ENCODE measurements at regions of chr19 and their contacts with region 1.

Region 1: DNA sequence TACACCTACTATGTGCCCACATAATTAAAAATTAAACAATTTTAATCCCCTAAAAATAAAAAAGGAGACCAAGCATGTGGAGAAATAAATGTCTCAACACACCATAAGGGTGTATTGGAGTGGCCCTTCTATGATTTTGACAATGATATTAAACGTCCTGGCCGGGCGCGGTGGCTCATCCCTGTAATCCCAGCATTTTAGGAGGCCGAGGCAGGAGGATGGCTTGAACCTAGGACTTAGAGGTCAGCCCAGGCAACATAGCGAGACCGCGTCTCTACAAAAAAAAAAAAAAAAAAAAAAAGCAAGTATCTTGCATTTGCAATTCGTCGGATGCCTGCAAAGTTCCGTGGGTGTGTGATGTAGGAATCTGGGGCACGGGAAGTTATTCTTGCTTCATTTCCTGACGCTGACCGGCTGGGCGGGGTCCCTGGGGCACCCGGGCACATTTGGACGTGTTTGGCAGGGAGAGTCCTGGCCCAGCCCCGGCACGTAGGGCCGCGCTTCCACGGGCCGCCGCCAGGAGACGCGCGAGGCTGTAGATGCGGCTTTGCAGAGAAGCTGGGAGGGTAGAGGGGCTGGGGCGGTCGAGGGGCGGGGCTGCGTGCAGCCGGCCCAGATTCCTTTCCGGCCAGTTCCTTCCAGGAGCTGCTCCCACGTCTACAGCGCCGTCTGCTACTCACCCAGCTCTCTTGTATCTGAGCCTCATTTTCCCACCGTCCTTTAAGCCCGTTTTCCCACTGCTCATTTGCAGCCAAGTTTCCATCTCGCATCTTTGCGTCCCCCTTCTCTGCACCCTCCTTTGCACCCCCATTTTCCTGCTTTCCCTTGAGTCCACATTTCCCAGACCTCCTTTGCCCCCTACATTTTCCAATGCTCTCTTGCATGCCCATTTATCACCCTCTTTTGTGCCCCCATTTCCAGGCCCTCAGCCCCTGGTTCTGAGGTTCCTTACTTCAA is 2.2 kb upstream of the TSPAN16 start:
- DNase-seq: peak; percentile 96 to 98 (median 98)
- H3K4me3 ChIP-seq: peak overlapping the region in 2 of 3 experiments; percentile 19 to 69
- H3K4me3 Mint-ChIP-seq: peak overlapping the region; percentile 67 to 82
- H3K27ac ChIP-seq: peak overlapping the region; percentile 58 to 78
- H3K27ac Mint-ChIP-seq: peak overlapping the region; percentile 84 to 95 (median 93)
- H3K4me1 ChIP-seq: peaks cover 75 to 78% of the 10 kb centered on the region in 2 donors
- H3K4me1 Mint-ChIP-seq: peaks cover 72% of the 10 kb centered on the region
- H3K27me3 ChIP-seq: no peaks in the 10 kb centered on the region
- H3K27me3 Mint-ChIP-seq: peaks cover 0 to 5% (median 4%) of the 10 kb centered on the region in 3 donors
- CTCF ChIP-seq: peak; percentile 98

Region 2: DNA sequence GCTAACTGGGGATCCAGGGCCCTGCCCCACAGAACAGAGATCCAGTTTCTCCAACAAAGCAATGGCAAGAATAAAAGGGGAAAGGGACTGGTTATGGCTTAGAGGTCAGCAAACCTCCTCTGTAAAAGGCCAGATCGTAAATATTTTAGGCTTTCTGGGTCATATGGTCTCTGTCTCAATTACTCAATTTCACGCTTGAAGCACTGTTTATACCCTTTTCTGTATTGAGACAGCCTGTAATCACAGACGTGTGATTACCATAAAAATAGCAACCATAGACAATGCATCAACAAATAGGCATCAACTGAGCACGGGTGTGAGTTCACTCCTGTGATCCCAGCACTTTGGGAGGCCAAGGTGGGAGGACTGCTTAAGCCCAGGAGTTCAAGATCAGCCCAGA is 36.4 kb after region 1 on chr19:
- intact Hi-C with region 1: loop called (anchors 5 kb)
- DNase-seq: no peak
- H3K4me3 ChIP-seq: no peak overlapping the region
- H3K4me3 Mint-ChIP-seq: no peak overlapping the region
- H3K27ac ChIP-seq: no peak overlapping the region
- H3K27ac Mint-ChIP-seq: peak overlapping the region in 4 of 7 donors; percentile 31 to 50 (median 46)
- H3K4me1 ChIP-seq: peaks cover 19 to 29% of the 10 kb centered on the region in 2 donors
- H3K4me1 Mint-ChIP-seq: peaks cover 17% of the 10 kb centered on the region
- H3K27me3 ChIP-seq: no peaks in the 10 kb centered on the region
- H3K27me3 Mint-ChIP-seq: peaks cover 0 to 2% (median 0%) of the 10 kb centered on the region in 3 donors
- CTCF ChIP-seq: no peak

Region 3: DNA sequence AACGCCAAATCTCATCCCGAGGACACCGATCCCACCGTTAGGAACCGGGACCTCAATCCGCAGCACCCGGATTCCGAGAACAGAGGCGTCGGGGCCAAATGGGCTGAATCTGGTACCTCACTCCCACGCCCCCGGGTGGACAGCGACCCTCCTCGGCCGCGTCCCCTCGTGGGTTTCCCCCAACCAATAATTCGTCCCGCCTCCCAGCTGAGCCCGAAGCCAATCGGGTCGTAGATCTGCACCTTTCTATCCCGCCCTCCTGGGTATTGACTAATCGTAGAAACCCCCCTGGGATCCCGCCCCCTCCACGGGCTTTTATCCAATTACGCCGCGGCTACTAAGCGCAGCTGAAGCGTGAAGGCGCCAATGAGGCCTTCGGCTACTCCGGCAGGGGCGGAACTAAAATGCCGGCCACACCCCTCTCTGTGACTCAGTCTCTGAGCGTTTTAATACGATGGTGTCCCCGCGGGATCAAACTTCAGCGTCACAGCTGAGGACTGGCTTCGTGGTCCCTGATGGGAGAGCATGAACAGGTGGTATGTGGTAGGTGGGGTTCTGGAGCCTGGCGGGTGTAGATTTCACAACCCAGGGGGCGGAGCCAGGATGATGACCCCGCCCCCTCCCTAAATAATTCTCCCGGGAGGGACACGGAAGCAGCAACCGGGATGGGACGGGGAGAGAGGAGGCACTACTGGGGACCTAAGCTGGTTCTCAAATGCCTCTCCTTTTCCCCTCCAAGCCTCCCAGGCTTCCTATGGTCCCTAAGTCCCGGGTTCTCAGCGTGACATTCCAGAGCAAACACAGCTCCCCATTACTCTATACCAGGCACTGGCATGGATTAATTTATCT is 52.6 kb after region 1 on chr19 and contains the starts of genes CCDC159 and TMEM205:
- intact Hi-C with region 1: loop called (anchors 2 kb)
- DNase-seq: peak; percentile 98 to 100 (median 99)
- H3K4me3 ChIP-seq: peak within 1 kb of the TSS; percentile 80 to 91 (median 85)
- H3K4me3 Mint-ChIP-seq: peak within 1 kb of the TSS; percentile 92 to 97
- H3K27ac ChIP-seq: peak within 1 kb of the TSS; percentile 91 to 98
- H3K27ac Mint-ChIP-seq: peak within 1 kb of the TSS; percentile 97 to 99 (median 98)
- H3K4me1 ChIP-seq: peaks cover 34 to 49% of the 10 kb centered on the region in 2 donors
- H3K4me1 Mint-ChIP-seq: peaks cover 38% of the 10 kb centered on the region
- H3K27me3 ChIP-seq: no peaks in the 10 kb centered on the region
- H3K27me3 Mint-ChIP-seq: peaks cover 0 to 2% (median 0%) of the 10 kb centered on the region in 3 donors
- CTCF ChIP-seq: no peak
- polyA plus RNA-seq, gene CCDC159: 37.1 to 374 (median 38.3) TPM
- polyA plus RNA-seq, gene TMEM205: 252 to 335 (median 263) TPM

Region 4: GRCh38 chr19:11482384-11483050 is 188.8 kb after region 1 on chr19:
- intact Hi-C with region 1: loop called in 1 of 2 experiments (anchors 5 kb)
- DNase-seq: peak; percentile 84 to 91 (median 85)
- H3K4me3 ChIP-seq: peak overlapping the region in 1 of 3 experiments; percentile 38
- H3K4me3 Mint-ChIP-seq: peak overlapping the region; percentile 60 to 84
- H3K27ac ChIP-seq: no peak overlapping the region
- H3K27ac Mint-ChIP-seq: peak overlapping the region in 3 of 7 donors; percentile 46 to 74 (median 69)
- H3K4me1 ChIP-seq: peaks cover 35 to 49% of the 10 kb centered on the region in 2 donors
- H3K4me1 Mint-ChIP-seq: peaks cover 24% of the 10 kb centered on the region
- H3K27me3 ChIP-seq: peaks cover 23 to 45% of the 10 kb centered on the region in 2 donors
- H3K27me3 Mint-ChIP-seq: peaks cover 34 to 53% (median 43%) of the 10 kb centered on the region in 3 donors
- CTCF ChIP-seq: peak; percentile 95

Measured in CD14-positive monocyte (primary cell).